H1 (cell line): ENCODE measurements at regions of chr15 and their contacts with region 1.

Region 1: DNA sequence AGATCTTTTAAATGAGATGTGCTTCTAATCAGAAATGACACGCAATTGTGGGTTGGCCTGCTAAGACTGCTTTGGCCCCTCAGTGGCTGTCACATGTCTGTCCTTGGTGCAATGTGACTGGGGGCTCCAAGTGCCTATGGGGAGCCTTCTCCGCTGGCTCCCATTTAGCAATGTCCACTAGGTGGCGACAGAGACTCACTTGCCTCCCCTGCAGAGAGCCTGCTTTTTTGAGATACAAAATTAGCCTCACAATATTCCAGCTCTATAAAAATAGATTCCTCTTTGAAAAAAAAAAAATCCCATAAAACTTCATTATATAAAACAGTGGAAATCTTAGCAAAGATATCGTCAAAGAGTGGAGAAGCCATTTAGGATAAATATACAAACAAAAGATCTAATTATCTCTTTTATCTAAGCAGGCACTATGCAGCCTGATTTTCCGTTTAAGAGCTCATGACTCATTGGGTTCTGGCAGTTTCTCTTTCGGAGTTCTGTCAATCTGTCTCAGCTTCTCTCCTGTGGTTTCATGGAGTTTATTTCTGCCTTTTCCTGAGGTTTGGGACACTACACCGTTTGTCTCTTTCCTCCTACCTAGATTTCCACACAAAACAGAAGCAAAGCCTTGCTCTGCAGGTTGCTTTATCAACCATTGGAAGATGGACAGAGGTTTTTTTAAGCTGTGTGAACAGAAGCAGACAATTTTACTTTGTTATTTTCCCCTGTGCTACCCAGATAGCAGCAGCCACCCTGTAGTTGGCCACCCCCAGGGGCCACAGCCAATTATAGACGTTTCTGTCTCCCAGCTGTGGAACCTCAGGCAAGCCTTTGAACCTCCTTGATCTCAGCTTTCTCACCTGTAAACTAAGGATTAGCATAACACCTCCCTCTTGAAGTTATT is 68.4 kb upstream of the TNFAIP8L3 start:
- DNase-seq: peak; percentile 29 to 86
- H3K4me3 ChIP-seq: no peak overlapping the region
- H3K27ac ChIP-seq: no peak overlapping the region
- H3K4me1 ChIP-seq: peaks cover 0 to 8% (median under 1%) of the 10 kb centered on the region in 4 experiments; a peak in 3 of 7 replicates
- H3K27me3 ChIP-seq: 0 out of 7 replicates have a peak, but pooled peaks cover 0 to 2% (median 0%) of the 10 kb centered on the region in 4 experiments
- CTCF ChIP-seq: peak; percentile 84 to 88 (median 87)
- EP300 ChIP-seq: no peak
- POLR2A ChIP-seq: no peak
- RAD21 ChIP-seq: peak; percentile 81 to 87

Region 2: GRCh38 chr15:51111061-51111460 is 52.1 kb before region 1 on chr15:
- CTCF ChIA-PET with region 1: no interaction called
- POLR2A ChIA-PET with region 1: no interaction called
- DNase-seq: no peak
- H3K4me3 ChIP-seq: no peak overlapping the region
- H3K27ac ChIP-seq: no peak overlapping the region
- H3K4me1 ChIP-seq: no peaks in the 10 kb centered on the region
- H3K27me3 ChIP-seq: no peaks in the 10 kb centered on the region
- CTCF ChIP-seq: no peak
- EP300 ChIP-seq: no peak
- POLR2A ChIP-seq: no peak
- RAD21 ChIP-seq: no peak

Region 3: DNA sequence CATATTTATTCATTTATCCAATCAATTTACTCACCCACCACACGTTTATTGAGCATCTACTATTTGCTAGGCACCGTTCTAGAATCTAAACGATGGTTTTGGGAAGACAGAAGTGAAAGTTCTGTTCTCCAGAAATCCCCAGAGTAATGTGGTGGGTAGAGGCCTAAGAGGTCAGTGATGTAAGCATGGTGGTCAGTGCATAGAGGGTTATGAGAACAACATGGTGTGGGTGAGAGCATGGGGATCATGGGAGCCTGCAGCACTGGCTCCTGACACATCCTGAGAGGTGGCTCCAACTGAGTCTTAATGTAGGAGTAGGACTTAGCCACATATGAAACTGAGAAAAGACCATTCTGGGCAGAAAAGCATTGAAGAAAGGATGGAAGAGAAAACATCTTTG is 16.9 kb after region 1 on chr15:
- CTCF ChIA-PET with region 1: interaction called, 24 read pairs
- POLR2A ChIA-PET with region 1: no interaction called
- DNase-seq: no peak
- H3K4me3 ChIP-seq: no peak overlapping the region
- H3K27ac ChIP-seq: no peak overlapping the region
- H3K4me1 ChIP-seq: no peaks in the 10 kb centered on the region
- H3K27me3 ChIP-seq: no peaks in the 10 kb centered on the region
- CTCF ChIP-seq: no peak
- EP300 ChIP-seq: no peak
- POLR2A ChIP-seq: no peak
- RAD21 ChIP-seq: no peak

Region 4: DNA sequence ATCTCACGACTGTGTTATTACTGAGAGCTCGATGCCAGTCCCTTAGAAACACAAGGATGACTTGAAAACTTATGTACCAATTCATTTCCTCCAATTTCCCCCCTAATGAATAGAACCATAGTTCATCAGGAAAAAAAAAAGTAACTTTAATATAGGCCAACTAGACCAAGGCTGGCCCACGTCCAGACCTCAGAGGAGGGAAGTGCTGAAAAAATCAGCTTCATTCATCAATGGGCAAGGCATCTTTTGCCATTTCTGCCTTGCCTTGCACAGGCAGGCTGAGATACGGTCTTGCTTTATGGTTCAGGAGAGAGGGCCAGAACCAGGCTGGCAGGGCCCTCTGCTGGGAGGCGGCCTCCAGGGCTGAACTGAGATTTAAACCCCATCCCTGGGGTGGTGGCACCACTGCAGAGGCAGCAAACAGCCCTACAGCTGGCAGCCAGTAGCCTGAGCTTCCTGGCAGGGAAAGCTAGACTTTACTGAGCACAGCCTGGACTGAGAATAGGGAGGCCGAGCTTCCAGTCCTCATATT is 35.7 kb after region 1 on chr15:
- CTCF ChIA-PET with region 1: interaction called, 91 read pairs
- POLR2A ChIA-PET with region 1: no interaction called
- DNase-seq: no peak
- H3K4me3 ChIP-seq: no peak overlapping the region
- H3K27ac ChIP-seq: no peak overlapping the region
- H3K4me1 ChIP-seq: no peaks in the 10 kb centered on the region
- H3K27me3 ChIP-seq: no peaks in the 10 kb centered on the region
- CTCF ChIP-seq: no peak
- EP300 ChIP-seq: no peak
- POLR2A ChIP-seq: no peak
- RAD21 ChIP-seq: peak in 1 of 2 experiments; percentile 17; a peak in 1 of 4 replicates

Region 5: DNA sequence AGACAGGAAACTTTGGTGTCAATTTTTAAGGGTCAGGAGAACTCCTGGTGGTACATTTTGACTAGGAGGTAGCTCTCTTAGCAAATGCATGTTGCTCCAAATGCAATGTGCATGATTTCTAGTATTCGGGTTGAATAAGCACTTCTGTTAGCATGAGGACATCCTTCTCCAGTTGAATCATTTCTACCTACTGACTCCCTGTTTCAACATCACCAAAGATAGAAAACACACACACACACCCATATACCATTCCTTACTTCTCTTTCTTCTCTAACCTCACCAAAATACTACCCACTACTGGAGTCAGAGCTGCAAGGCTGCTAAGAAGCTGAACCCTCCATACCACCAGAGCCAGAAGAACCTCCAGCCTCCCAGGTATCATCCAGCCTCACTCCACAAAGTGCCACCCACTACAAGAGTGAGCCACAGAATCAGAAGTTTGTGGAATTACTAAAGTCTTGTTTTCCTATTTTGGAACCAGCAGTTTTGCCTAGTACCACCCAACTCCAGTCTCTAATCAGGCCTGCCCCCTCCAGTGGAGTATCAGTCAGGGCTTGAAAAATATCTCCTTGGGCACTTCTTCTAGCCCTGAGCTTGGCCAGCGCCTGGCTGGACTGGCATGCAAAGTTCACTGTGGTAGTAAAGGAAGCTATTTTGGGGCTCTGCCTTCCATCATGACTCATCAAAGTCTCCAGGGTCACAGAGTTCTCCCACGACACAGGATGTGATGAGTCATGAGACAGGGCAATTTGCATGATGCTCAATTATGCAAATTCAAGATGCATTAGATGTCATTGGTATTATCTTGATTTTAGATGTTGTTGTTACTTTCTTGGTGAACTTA is 65.0 kb after region 1 on chr15:
- CTCF ChIA-PET with region 1: interaction called, 13 read pairs
- POLR2A ChIA-PET with region 1: no interaction called
- DNase-seq: peak in 1 of 2 experiments; percentile 7
- H3K4me3 ChIP-seq: no peak overlapping the region
- H3K27ac ChIP-seq: no peak overlapping the region
- H3K4me1 ChIP-seq: peaks cover 0 to 4% (median 1%) of the 10 kb centered on the region in 4 experiments; a peak in 2 of 7 replicates
- H3K27me3 ChIP-seq: no peaks in the 10 kb centered on the region
- CTCF ChIP-seq: no peak
- EP300 ChIP-seq: no peak
- POLR2A ChIP-seq: no peak
- RAD21 ChIP-seq: no peak

Region 6: DNA sequence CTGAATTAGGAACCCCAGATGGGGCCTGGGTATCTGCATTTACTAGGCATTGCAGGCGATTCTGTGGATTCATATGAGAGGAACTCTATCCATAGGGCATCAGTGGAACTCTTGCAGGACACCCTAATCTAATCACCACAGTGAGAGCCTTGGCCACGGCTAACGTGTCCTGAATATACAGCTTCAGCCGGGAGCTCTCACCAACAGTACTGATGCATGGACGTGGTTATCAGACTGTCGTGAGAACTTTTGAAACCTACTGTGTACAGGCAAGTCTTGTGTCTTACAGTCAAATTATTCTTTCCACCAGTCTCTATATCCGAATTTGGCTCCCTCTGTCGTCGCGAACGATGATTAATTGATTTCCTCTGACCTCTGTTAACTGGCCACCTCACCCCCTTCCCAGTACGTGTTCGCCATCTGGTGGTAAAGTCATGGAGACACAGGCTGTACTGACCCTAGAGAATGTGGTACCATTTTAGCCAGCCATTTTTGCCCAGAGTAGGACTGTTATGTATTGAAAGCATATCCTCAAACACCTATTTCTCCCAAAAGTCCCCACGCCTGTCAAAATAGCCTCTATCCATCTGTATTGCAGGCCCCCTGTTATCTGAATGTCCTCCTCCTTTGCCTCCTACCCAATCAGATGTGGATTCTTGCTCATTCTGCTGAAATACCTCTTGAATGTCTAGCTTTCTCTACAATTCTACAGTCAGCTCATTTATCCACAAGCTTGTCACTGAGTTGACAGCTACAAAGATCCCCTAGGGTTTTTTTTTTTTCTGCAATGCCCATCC is 218.1 kb after region 1 on chr15:
- CTCF ChIA-PET with region 1: interaction called, 69 read pairs
- POLR2A ChIA-PET with region 1: no interaction called
- DNase-seq: peak in 1 of 2 experiments; percentile 61
- H3K4me3 ChIP-seq: no peak overlapping the region
- H3K27ac ChIP-seq: no peak overlapping the region
- H3K4me1 ChIP-seq: no peaks in the 10 kb centered on the region; a peak in 1 of 7 replicates
- H3K27me3 ChIP-seq: no peaks in the 10 kb centered on the region
- CTCF ChIP-seq: peak; percentile 83 to 99 (median 98)
- EP300 ChIP-seq: no peak
- POLR2A ChIP-seq: no peak
- RAD21 ChIP-seq: peak; percentile 99 to 100